Right lobe of liver (tissue), 6 donors: ENCODE measurements at regions of chr9 and their contacts with region 1.

Region 1: DNA sequence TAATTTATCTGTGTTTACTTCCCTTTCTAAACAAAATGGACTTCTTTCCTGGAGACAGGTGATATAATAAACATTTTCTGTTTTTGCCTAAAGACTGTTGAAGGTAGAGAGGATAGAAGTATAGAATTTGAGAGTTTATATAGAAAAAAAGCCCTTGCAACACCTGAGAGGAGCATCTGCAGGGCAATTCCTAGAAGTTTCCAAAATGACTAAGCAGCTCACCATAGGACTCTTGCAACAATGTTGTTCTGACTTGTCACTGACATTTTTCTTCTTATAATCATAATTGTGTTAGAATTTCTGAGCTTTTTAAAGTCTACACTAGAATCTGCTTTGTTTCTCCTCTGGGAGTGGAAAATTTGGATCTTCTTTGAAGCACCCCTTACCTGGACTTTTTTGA is 216.8 kb downstream of the TUSC1 start:
- DNase-seq: no peak
- ATAC-seq: no peak
- H3K4me3 ChIP-seq: no peak overlapping the region
- H3K27ac ChIP-seq: no peak overlapping the region
- H3K4me1 ChIP-seq: no peaks in the 10 kb centered on the region
- H3K27me3 ChIP-seq: no peaks in the 10 kb centered on the region
- CTCF ChIP-seq: no peak
- POLR2A ChIP-seq: no peak

Region 2: DNA sequence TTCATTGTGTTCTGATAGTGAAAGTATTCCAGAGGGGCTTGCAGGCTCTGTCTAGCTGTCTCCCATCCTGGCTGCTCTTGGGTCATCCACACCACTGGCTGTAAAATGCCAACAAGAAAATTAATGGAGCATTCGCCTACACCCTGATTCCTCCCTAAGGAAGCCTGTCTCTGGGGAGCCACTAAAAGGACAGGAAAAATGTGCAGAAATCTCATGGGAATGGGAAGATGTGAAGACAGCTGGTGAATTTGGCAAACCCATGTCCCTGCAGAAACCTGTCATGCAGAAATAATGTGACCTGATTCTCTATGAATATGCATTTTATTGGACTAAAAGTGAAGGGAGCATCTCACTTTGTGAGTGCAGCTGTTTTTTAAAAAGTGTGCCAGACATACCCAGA is 48.8 kb before region 1 on chr9:
- intact Hi-C with region 1: loop called in 1 of 2 experiments (anchors 10 kb)
- DNase-seq: no peak
- ATAC-seq: no peak
- H3K4me3 ChIP-seq: no peak overlapping the region
- H3K27ac ChIP-seq: no peak overlapping the region
- H3K4me1 ChIP-seq: no peaks in the 10 kb centered on the region
- H3K27me3 ChIP-seq: no peaks in the 10 kb centered on the region
- CTCF ChIP-seq: no peak
- POLR2A ChIP-seq: no peak